ENCODE measurements at regions of chr1 and their contacts with region 1.

Region 1: GRCh38 chr1:95043141-95043980 is 29.4 kb downstream of the ALG14 start:
- DNase-seq: peak; percentile 76 to 91 (median 87)
- H3K4me3 ChIP-seq: no peak overlapping the region
- H3K27ac ChIP-seq: peak overlapping the region in 1 of 2 donors; percentile 75
- H3K4me1 ChIP-seq: peaks cover 7% of the 10 kb centered on the region
- H3K27me3 ChIP-seq: no peaks in the 10 kb centered on the region
- CTCF ChIP-seq: peak; percentile 99
- EP300 ChIP-seq: no peak
- POLR2A ChIP-seq: no peak

Region 2: DNA sequence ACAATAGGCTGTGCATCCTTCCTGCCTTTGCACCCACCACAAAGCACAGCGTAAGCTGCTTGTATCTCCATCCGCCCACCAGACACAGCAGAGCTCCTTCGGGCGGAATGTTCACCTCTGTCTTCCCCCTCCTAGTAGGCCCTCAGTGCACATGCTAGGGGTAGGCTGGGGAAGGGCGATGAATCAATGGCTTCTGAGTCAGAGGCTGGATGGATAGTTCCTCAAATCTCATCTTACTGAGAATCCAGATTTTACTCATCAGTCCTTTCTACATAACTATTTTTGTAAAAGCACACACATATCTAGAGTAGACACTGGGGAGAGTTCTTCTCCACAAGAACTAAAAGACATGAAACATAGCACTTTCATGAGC is 1435.6 kb before region 1 on chr1:
- intact Hi-C with region 1: loop called in 1 of 4 experiments (anchors 10 kb)
- DNase-seq: no peak
- H3K4me3 ChIP-seq: no peak overlapping the region
- H3K27ac ChIP-seq: no peak overlapping the region
- H3K4me1 ChIP-seq: peaks cover 7% of the 10 kb centered on the region
- H3K27me3 ChIP-seq: no peaks in the 10 kb centered on the region
- CTCF ChIP-seq: no peak
- EP300 ChIP-seq: no peak
- POLR2A ChIP-seq: no peak

Region 3: DNA sequence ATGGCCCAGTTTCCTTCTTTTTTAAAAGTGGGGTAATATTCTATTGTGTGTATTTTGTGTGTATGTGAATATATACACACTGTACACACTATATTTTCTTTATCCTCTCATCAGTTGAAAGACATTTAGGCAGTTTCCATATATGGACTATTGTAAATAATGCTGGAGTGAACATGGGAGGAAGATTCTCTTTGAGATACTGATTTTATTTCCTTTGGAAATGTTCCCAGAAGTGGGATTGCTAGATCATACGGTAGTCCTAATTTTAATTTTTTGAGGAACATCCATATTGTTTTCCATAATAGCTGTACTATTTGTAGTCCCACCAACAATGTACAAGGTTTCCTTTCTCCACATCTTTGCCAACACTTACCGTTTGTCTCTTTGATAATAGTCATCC is 552.8 kb before region 1 on chr1:
- intact Hi-C with region 1: loop called in 1 of 4 experiments (anchors 10 kb)
- DNase-seq: no peak
- H3K4me3 ChIP-seq: no peak overlapping the region
- H3K27ac ChIP-seq: no peak overlapping the region
- H3K4me1 ChIP-seq: no peaks in the 10 kb centered on the region
- H3K27me3 ChIP-seq: no peaks in the 10 kb centered on the region
- CTCF ChIP-seq: no peak
- EP300 ChIP-seq: no peak
- POLR2A ChIP-seq: no peak

Region 4: GRCh38 chr1:94854458-94855306 is 188.7 kb before region 1 on chr1:
- intact Hi-C with region 1: loop called (anchors 1 to 5 kb)
- DNase-seq: peak; percentile 87 to 92 (median 90)
- H3K4me3 ChIP-seq: peak overlapping the region; percentile 40
- H3K27ac ChIP-seq: peak overlapping the region in 1 of 2 donors; percentile 50
- H3K4me1 ChIP-seq: peaks cover 6% of the 10 kb centered on the region
- H3K27me3 ChIP-seq: no peaks in the 10 kb centered on the region
- CTCF ChIP-seq: peak; percentile 87 to 98 (median 98)
- EP300 ChIP-seq: no peak
- POLR2A ChIP-seq: no peak

Region 5: GRCh38 chr1:94912263-94913184 is 130.8 kb before region 1 on chr1:
- intact Hi-C with region 1: loop called in 1 of 4 experiments (anchors 5 kb)
- DNase-seq: no peak
- H3K4me3 ChIP-seq: no peak overlapping the region
- H3K27ac ChIP-seq: no peak overlapping the region
- H3K4me1 ChIP-seq: peaks cover 25% of the 10 kb centered on the region
- H3K27me3 ChIP-seq: no peaks in the 10 kb centered on the region
- CTCF ChIP-seq: no peak
- EP300 ChIP-seq: no peak
- POLR2A ChIP-seq: no peak

Region 6: GRCh38 chr1:94926915-94927404 is 116.4 kb before region 1 on chr1 and contains the start of gene CNN3:
- intact Hi-C with region 1: loop called in 3 of 4 experiments (anchors 5 to 10 kb)
- DNase-seq: peak; percentile 96 to 97 (median 96)
- H3K4me3 ChIP-seq: peak within 1 kb of the TSS; percentile 57
- H3K27ac ChIP-seq: peak within 1 kb of the TSS; percentile 99
- H3K4me1 ChIP-seq: peaks cover 19% of the 10 kb centered on the region
- H3K27me3 ChIP-seq: no peaks in the 10 kb centered on the region
- CTCF ChIP-seq: peak in 1 of 3 donors; percentile 5
- EP300 ChIP-seq: no peak
- POLR2A ChIP-seq: peak; percentile 98
- total RNA-seq, gene CNN3: 168 to 332 (median 272) TPM

Region 7: GRCh38 chr1:94974824-94975223 is 68.5 kb before region 1 on chr1:
- intact Hi-C with region 1: loop called in 1 of 4 experiments (anchors 2 kb)
- DNase-seq: no peak
- H3K4me3 ChIP-seq: no peak overlapping the region
- H3K27ac ChIP-seq: no peak overlapping the region
- H3K4me1 ChIP-seq: peaks cover 3% of the 10 kb centered on the region
- H3K27me3 ChIP-seq: no peaks in the 10 kb centered on the region
- CTCF ChIP-seq: no peak
- EP300 ChIP-seq: no peak
- POLR2A ChIP-seq: no peak